ENCODE measurements at regions of chr9 and their contacts with region 1.

Region 1: DNA sequence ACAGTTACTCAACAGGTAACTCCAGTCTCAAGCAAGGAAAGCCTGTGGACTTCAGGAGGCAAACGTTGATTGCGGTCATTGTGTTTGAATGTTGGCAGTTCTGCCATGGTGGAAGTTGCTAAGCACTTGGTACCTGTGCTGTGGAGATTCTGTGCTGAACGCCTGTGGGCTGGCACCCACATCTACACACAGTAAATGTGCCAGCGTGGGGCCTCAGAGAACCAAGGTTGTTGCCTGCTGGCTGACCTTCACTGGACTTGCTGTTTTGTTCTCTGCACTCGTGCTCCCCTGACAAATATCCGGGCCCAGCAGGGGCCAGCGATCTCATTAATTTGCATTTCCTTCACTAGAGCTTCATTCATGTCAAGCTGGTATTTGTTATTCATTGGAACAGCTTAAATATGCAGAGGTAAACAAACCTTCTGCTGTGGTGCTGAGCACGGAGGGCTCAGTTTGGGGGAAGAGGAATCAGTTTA is 141.8 kb downstream of the PRKACG start:
- DNase-seq: no peak
- H3K4me3 ChIP-seq: no peak overlapping the region
- H3K27ac ChIP-seq: no peak overlapping the region
- H3K4me1 ChIP-seq: peaks cover 0 to 7% of the 10 kb centered on the region in 2 donors
- H3K27me3 ChIP-seq: no peaks in the 10 kb centered on the region
- CTCF ChIP-seq: no peak

Region 2: GRCh38 chr9:68832853-68833518 is 39.1 kb before region 1 on chr9:
- intact Hi-C with region 1: no loop called
- DNase-seq: no peak
- H3K4me3 ChIP-seq: peak overlapping the region in 1 of 2 donors; percentile 8
- H3K27ac ChIP-seq: peak overlapping the region; percentile 59 to 72
- H3K4me1 ChIP-seq: peaks cover 0 to 2% of the 10 kb centered on the region in 2 donors
- H3K27me3 ChIP-seq: no peaks in the 10 kb centered on the region
- CTCF ChIP-seq: no peak

Region 3: GRCh38 chr9:68912561-68912960 is 40.5 kb after region 1 on chr9:
- intact Hi-C with region 1: no loop called
- DNase-seq: no peak
- H3K4me3 ChIP-seq: no peak overlapping the region
- H3K27ac ChIP-seq: peak overlapping the region in 1 of 2 donors; percentile 10
- H3K4me1 ChIP-seq: no peaks in the 10 kb centered on the region
- H3K27me3 ChIP-seq: no peaks in the 10 kb centered on the region
- CTCF ChIP-seq: no peak

Region 4: DNA sequence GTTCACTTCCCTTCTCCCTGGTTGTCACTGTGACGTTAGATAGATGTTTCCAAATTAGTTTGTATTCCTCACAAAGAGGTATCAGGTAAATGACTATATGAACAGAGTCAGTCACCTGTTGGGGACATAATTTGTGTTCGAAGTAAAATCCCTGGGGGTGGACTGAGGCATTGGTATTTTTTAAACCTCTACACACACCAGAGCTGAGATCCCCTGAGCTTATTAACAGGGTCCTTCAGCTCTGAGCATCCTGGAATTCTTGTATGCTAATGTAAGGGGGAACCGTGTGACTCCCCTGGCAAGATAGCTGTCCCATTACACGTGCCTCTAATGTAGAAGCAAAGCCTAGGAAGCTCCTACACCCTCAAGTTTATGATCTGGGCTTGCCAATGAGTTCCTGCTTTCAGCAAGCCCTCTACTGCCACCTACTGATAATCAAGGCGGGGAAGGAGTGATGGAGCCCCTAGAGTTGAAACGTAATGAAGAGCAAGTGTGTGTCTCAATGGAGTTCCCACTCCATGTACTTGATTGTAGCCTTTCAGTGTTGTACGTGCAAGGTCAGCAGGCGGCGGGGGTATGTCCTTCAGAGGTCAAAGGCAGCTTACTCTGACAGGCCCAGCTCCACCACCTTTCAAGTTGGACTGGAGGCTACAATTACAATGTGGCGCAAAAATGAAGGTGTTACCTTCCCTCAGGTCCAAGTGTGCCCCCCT is 127.5 kb after region 1 on chr9:
- intact Hi-C with region 1: loop called (anchors 10 kb)
- DNase-seq: peak in 1 of 2 donors; percentile 80
- H3K4me3 ChIP-seq: no peak overlapping the region
- H3K27ac ChIP-seq: no peak overlapping the region
- H3K4me1 ChIP-seq: no peaks in the 10 kb centered on the region
- H3K27me3 ChIP-seq: no peaks in the 10 kb centered on the region
- CTCF ChIP-seq: peak; percentile 46 to 81 (median 68)

Measured in ascending aorta (tissue), 2 donors.